ENCODE measurements at regions of chr2 and their contacts with region 1.

Region 1: DNA sequence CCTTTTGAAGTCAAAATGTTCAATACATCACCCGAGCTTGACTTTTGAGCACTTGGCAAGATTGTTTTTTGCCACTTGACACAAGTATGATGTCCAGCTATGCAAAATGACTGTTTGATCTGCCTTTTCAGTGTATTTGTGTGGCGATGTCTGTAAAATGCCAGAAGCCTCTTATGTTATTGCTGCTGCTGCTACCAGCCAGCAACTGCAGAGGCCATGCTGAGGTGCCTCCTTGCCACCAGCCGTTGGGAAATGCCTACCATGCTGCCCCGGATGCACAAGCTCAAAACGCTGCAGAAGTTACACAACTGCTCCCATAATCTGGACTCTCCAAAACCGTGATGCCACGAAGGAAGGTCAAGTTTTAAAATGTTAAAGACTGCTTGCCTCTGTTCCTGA is 80.3 kb downstream of the RTN4 start:
- DNase-seq: no peak
- ATAC-seq: no peak
- H3K4me3 ChIP-seq: no peak overlapping the region
- H3K27ac ChIP-seq: no peak overlapping the region
- H3K4me1 ChIP-seq: no peaks in the 10 kb centered on the region; the same call in 1 of the 2 replicates
- H3K27me3 ChIP-seq: no peaks in the 10 kb centered on the region
- CTCF ChIP-seq: no peak
- EP300 ChIP-seq: no peak
- POLR2A ChIP-seq: no peak
- RAD21 ChIP-seq: no peak

Region 2: DNA sequence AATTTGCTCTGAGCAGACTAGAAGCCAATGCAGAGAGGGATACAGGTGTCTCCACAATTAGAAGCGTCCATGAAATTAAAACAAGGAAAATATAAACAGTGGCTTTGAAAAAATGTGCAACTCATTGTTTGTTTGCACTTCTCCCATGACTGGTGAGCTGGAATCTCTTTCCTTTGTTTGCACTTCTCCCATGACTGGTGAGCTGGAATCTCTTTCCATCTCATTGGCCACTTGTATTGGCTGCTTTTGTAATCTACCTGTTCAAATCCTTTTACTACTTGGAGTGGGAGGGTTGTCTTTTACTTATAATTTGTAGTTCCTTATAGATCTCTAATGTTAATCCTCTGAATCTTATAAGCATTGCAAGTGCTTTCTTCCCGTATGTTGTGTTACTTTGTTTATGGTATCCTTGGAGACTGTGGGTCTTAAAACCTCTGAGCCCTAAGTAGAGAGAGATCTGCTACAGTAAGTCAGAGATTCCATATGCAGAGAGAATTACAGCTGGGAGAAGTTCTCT is 13.8 kb before region 1 on chr2:
- CTCF ChIA-PET with region 1: interaction called, 4 read pairs
- POLR2A ChIA-PET with region 1: no interaction called
- RAD21 ChIA-PET with region 1: no interaction called
- SMC1A ChIA-PET with region 1: interaction called, 15 read pairs
- in situ Hi-C with region 1: no loop called
- intact Hi-C with region 1: no loop called
- DNase-seq: no peak
- ATAC-seq: no peak
- H3K4me3 ChIP-seq: no peak overlapping the region
- H3K27ac ChIP-seq: no peak overlapping the region
- H3K4me1 ChIP-seq: no peaks in the 10 kb centered on the region; the same call in 1 of the 2 replicates
- H3K27me3 ChIP-seq: no peaks in the 10 kb centered on the region
- CTCF ChIP-seq: no peak
- EP300 ChIP-seq: no peak
- POLR2A ChIP-seq: no peak
- RAD21 ChIP-seq: no peak